Activated CD4-positive, alpha-beta memory T cell treated with anti-CD3 and anti-CD28 coated beads for 36 hours (primary cell): ENCODE measurements at regions of chr2 and their contacts with region 1.

Region 1: DNA sequence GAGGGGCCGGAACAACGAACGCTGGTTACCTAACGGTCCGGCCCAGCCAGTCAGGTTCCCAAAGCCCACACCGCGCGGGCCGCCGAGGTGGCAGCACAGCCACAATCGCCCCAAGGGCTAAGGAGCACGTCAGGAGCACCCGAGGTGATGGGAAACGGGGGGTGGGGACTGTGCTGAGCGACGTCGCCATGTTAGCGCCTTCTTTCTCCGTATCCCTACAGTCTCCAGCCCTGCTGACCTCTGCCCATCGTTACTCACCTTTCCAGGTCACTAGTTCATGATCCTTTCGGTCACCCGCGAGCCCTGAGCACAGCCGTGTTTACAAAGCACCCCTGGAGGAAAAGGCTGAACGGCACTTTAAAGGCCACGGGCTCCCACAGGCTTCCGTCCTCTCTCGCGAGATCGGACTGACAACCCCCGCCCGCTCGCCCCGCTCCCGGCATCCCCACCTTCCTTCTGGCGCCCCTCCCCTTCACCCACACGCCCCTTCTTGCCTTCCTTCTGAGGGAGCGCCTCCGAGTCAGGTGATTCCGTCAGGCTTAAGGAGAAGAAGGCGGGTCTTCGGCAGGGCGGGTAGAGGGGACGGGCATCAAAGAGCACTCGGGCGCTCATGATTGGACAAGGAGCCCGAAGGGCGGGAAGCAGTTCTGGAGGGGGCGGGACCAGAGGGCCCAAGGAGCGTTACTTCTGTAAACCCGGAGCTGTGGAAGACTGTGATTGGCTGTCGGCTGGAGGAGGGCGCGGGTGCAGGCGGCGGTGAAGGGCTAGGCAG is at the start of gene ATF2:
- DNase-seq: peak; percentile 99
- H3K4me3 Mint-ChIP-seq: peak within 1 kb of the TSS; percentile 100
- H3K27ac Mint-ChIP-seq: peak within 1 kb of the TSS; percentile 97
- H3K4me1 Mint-ChIP-seq: peaks cover 41% of the 10 kb centered on the region
- H3K27me3 Mint-ChIP-seq: no peaks in the 10 kb centered on the region
- total RNA-seq, gene ATF2: 46.9 to 48.5 TPM

Region 2: GRCh38 chr2:174395284-174395968 is 772.6 kb before region 1 on chr2 and contains the start of gene SCRN3:
- CTCF ChIA-PET with region 1: no interaction called
- POLR2A ChIA-PET with region 1: no interaction called
- intact Hi-C with region 1: loop called (anchors 2 kb)
- DNase-seq: peak; percentile 88
- H3K4me3 Mint-ChIP-seq: peak within 1 kb of the TSS; percentile 98
- H3K27ac Mint-ChIP-seq: peak within 1 kb of the TSS; percentile 96
- H3K4me1 Mint-ChIP-seq: peaks cover 28% of the 10 kb centered on the region
- H3K27me3 Mint-ChIP-seq: no peaks in the 10 kb centered on the region
- total RNA-seq, gene SCRN3: 12.4 to 12.9 TPM

Region 3: GRCh38 chr2:174593574-174594203 is 574.3 kb before region 1 on chr2:
- CTCF ChIA-PET with region 1: no interaction called
- POLR2A ChIA-PET with region 1: no interaction called
- intact Hi-C with region 1: loop called (anchors 5 kb)
- DNase-seq: peak; percentile 79
- H3K4me3 Mint-ChIP-seq: peak overlapping the region; percentile 81
- H3K27ac Mint-ChIP-seq: peak overlapping the region; percentile 98
- H3K4me1 Mint-ChIP-seq: peaks cover 71% of the 10 kb centered on the region
- H3K27me3 Mint-ChIP-seq: no peaks in the 10 kb centered on the region

Region 4: DNA sequence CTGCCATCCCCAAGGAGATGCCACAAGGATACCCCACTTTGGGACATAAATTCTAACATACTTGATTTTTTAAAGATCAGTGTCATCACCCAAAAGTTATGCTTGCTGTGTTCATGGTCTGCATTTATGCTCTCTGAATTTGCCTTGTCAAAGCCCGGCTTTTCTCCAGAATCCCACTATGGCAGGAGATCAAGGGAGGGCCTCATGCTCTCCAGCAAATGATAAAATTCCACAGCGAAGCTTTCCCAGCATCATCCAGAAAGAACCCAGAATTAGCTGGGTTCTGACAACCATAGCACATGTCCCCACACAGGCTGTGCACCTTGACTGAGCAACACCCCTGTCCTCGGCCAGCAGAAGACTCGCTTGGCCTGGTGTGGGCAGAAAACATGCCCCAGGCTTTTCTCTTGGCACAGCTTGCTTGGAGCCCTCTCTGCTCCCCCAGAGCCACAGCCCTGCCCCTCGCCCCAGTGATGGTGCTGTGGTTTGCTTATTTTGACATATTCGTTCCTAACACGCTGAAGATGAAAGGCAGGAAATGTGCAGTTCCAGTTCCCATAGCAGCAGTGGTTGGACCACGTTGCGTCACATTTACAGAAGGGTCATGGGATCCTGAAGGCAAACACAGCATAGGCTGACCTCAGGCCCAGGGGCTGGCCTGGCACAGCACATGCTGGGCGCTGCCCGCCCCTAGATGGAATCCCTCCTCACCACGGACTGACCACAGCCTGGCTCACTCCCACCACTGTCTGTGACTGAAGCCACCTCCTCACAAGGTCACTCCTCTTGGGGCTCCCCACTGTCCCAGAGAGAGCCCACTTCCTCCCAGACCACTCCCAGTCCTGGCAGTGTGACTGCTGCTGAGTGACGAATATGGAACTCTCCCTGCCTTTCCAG is 389.6 kb before region 1 on chr2:
- CTCF ChIA-PET with region 1: no interaction called
- POLR2A ChIA-PET with region 1: no interaction called
- intact Hi-C with region 1: loop called (anchors 2 kb)
- DNase-seq: peak; percentile 91
- H3K4me3 Mint-ChIP-seq: peak overlapping the region; percentile 17
- H3K27ac Mint-ChIP-seq: peak overlapping the region; percentile 79
- H3K4me1 Mint-ChIP-seq: peaks cover 42% of the 10 kb centered on the region
- H3K27me3 Mint-ChIP-seq: no peaks in the 10 kb centered on the region

Region 5: GRCh38 chr2:175154661-175155082 is 13.3 kb before region 1 on chr2:
- CTCF ChIA-PET with region 1: no interaction called
- POLR2A ChIA-PET with region 1: interaction called, 4 read pairs
- intact Hi-C with region 1: loop called (anchors 1 kb)
- DNase-seq: no peak
- H3K4me3 Mint-ChIP-seq: no peak overlapping the region
- H3K27ac Mint-ChIP-seq: peak overlapping the region; percentile 75
- H3K4me1 Mint-ChIP-seq: peaks cover 46% of the 10 kb centered on the region
- H3K27me3 Mint-ChIP-seq: no peaks in the 10 kb centered on the region

Region 6: GRCh38 chr2:175227393-175227792 is 59.4 kb after region 1 on chr2:
- CTCF ChIA-PET with region 1: no interaction called
- POLR2A ChIA-PET with region 1: no interaction called
- intact Hi-C with region 1: loop called (anchors 5 kb)
- DNase-seq: no peak
- H3K4me3 Mint-ChIP-seq: no peak overlapping the region
- H3K27ac Mint-ChIP-seq: peak overlapping the region; percentile 46
- H3K4me1 Mint-ChIP-seq: peaks cover 18% of the 10 kb centered on the region
- H3K27me3 Mint-ChIP-seq: peaks cover 21% of the 10 kb centered on the region

Region 7: DNA sequence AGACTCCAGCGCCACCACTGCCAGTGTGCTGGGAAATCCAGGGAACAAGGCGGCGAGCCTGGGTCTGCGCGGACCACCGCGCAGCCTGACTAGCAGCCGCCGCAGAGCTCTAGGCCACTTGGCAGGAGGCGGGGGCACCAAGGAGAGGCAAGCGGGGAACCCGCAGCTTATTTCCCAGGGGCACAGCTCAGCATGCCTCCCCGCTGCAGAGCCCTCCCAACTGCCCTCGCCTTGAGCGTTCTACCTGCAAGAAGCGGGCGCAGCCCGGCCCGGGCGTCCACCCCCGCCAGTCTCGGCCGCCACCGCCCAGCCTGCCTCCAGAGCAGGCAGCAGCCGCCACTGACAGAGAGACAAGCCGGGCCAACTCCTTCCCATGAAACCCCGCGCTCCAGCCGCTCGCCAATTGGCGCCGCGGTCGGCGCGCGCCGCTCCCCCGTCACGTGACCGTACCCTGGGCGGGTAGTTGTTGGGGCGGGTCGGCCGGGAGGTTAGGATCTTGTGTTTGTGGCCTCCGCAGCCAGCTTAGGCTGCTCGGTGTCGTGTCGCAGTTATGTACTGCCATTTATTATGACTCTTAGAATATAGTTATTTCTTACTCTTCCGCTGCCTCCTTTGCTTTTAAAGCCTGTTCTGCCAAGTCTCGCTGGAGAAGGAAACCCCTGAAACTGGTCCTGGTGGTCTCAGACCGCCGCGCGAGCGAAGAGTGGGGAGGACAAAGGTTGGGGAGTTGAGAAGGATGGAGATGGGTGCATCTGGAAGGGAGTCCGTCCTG is 834.1 kb after region 1 on chr2 and contains the start of gene LNPK:
- CTCF ChIA-PET with region 1: no interaction called
- POLR2A ChIA-PET with region 1: no interaction called
- intact Hi-C with region 1: loop called (anchors 5 kb)
- DNase-seq: peak; percentile 96
- H3K4me3 Mint-ChIP-seq: peak within 1 kb of the TSS; percentile 90
- H3K27ac Mint-ChIP-seq: peak within 1 kb of the TSS; percentile 85
- H3K4me1 Mint-ChIP-seq: peaks cover 22% of the 10 kb centered on the region
- H3K27me3 Mint-ChIP-seq: peaks cover 3% of the 10 kb centered on the region
- total RNA-seq, gene LNPK: 31.2 to 36.6 TPM